CD4-positive, alpha-beta T cell (primary cell): ENCODE measurements at regions of chr20 and their contacts with region 1.

Region 1: GRCh38 chr20:24992487-24993205 is at the start of gene APMAP:
- DNase-seq: peak; percentile 89 to 99 (median 96)
- ATAC-seq: peak; percentile 91
- H3K4me3 ChIP-seq: peak within 1 kb of the TSS; percentile 87
- H3K4me3 Mint-ChIP-seq: peak within 1 kb of the TSS; percentile 96
- H3K27ac ChIP-seq: peak within 1 kb of the TSS; percentile 90 to 97
- H3K27ac Mint-ChIP-seq: peak within 1 kb of the TSS; percentile 99
- H3K4me1 ChIP-seq: peaks cover 42% of the 10 kb centered on the region
- H3K4me1 Mint-ChIP-seq: peaks cover 73% of the 10 kb centered on the region
- H3K27me3 ChIP-seq: no peaks in the 10 kb centered on the region
- H3K27me3 Mint-ChIP-seq: no peaks in the 10 kb centered on the region
- CTCF ChIP-seq: no peak
- total RNA-seq, gene APMAP: 9.5 to 11.3 TPM

Region 2: GRCh38 chr20:23350196-23350903 is 1642.3 kb before region 1 on chr20 and contains the start of gene NXT1:
- CTCF ChIA-PET with region 1: no interaction called
- POLR2A ChIA-PET with region 1: no interaction called
- intact Hi-C with region 1: loop called in 1 of 2 experiments (anchors 5 kb)
- DNase-seq: peak; percentile 90 to 98 (median 94)
- ATAC-seq: peak; percentile 81
- H3K4me3 ChIP-seq: peak within 1 kb of the TSS; percentile 77
- H3K4me3 Mint-ChIP-seq: peak within 1 kb of the TSS; percentile 98
- H3K27ac ChIP-seq: peak within 1 kb of the TSS; percentile 99 to 100
- H3K27ac Mint-ChIP-seq: peak within 1 kb of the TSS; percentile 99
- H3K4me1 ChIP-seq: peaks cover 30% of the 10 kb centered on the region
- H3K4me1 Mint-ChIP-seq: peaks cover 30% of the 10 kb centered on the region
- H3K27me3 ChIP-seq: no peaks in the 10 kb centered on the region
- H3K27me3 Mint-ChIP-seq: no peaks in the 10 kb centered on the region
- CTCF ChIP-seq: no peak
- total RNA-seq, gene NXT1: 55.4 to 57.1 TPM

Region 3: GRCh38 chr20:25057234-25058050 is 64.8 kb after region 1 on chr20:
- CTCF ChIA-PET with region 1: interaction called, 33 read pairs
- POLR2A ChIA-PET with region 1: interaction called, 77 read pairs
- intact Hi-C with region 1: no loop called
- DNase-seq: peak; percentile 45 to 94 (median 71)
- ATAC-seq: peak; percentile 45
- H3K4me3 ChIP-seq: peak overlapping the region; percentile 94
- H3K4me3 Mint-ChIP-seq: peak overlapping the region; percentile 88
- H3K27ac ChIP-seq: peak overlapping the region; percentile 86 to 89
- H3K27ac Mint-ChIP-seq: peak overlapping the region; percentile 88
- H3K4me1 ChIP-seq: peaks cover 55% of the 10 kb centered on the region
- H3K4me1 Mint-ChIP-seq: peaks cover 63% of the 10 kb centered on the region
- H3K27me3 ChIP-seq: no peaks in the 10 kb centered on the region
- H3K27me3 Mint-ChIP-seq: no peaks in the 10 kb centered on the region
- CTCF ChIP-seq: no peak

Region 4: DNA sequence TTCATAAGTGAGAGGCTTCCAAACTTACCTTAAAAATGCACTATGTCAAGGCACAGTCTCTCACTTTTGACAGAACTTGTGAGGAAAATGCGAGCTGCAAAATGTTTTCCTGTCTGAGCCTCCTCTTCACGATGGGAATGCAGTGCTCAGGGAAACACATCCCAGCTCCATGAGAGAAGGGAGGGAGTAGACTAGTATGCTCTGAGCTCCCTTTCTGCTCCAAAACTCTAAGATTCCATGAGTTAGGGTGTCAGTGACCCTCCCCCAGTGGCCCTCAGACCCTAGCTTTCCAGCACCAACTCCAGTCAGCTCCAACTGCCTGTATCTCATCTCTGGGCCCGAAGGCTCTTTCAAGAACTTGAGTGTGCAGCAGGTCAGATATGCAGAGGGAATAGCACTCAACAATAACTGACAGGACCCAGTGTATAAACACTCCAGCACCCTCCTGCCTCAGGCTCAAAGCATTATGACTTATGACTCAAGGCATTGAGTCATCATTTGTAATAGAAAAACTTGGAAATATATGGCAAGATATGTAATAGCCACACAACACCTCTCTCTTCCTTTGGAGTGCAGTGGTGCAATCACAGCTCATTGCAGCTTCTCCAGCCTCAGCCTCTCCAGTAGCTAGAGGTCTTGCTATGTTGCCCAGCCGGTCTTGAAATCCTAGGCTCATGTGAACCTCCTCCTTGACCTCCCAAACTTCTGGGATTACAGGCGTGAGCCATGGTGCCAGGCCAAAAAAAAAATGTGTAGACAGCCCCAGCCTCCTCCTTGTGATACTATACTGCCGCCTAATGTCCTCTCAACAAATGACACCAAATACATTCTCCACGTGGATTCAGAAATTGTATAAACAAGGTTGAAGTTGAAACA is 186.2 kb after region 1 on chr20:
- CTCF ChIA-PET with region 1: interaction called, 3 read pairs
- POLR2A ChIA-PET with region 1: no interaction called
- intact Hi-C with region 1: loop called (anchors 1 to 2 kb)
- DNase-seq: peak in 4 of 14 experiments; percentile 24 to 64 (median 61)
- ATAC-seq: peak; percentile 76
- H3K4me3 ChIP-seq: no peak overlapping the region
- H3K4me3 Mint-ChIP-seq: no peak overlapping the region
- H3K27ac ChIP-seq: no peak overlapping the region
- H3K27ac Mint-ChIP-seq: no peak overlapping the region
- H3K4me1 ChIP-seq: no peaks in the 10 kb centered on the region
- H3K4me1 Mint-ChIP-seq: no peaks in the 10 kb centered on the region
- H3K27me3 ChIP-seq: no peaks in the 10 kb centered on the region
- H3K27me3 Mint-ChIP-seq: peaks cover 18% of the 10 kb centered on the region
- CTCF ChIP-seq: peak; percentile 75

Region 5: DNA sequence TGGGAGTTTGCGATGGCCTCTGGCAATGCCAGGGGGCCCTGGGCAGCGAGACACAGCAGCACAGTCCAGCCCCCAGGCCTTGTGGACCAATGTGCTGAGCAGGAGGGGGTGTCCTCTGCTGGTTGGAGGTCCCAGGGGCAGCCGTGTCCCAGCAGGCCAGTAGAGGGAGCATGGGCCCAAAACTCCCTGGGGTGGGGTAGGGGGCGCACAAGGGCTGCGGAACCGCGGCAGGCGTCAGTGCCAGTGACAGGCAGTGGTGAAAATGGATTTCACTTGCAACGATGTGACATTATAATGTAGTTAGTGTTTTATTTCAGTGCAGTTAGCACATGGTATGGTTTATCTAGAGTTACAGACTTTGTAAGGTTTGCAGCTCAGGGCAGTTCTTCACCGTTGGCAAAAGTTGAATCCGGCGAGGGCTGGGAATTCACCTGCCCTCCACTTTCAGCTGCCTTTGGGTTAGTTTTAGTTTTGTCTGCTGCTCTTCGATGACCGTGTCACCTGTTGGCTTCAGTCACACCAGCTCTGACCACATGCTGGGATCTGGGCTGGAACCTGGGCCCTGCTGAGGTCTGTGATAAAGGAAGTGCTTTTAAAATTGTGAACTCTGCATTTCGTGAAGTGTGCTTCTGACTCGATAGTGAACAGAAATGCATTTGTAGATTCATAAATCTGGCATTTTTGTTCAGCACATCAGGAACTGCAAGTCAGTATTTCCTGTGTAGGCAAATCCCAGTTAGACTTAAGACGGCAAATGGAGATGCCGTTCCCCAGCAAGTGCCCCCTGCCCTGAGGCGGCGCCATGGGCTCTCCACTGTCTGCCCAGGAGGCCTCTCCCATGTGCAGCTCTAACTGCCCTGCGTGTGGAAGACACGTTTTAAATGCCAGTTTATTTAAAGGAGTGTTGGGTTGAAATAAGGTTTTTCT is 302.1 kb after region 1 on chr20:
- CTCF ChIA-PET with region 1: no interaction called
- POLR2A ChIA-PET with region 1: no interaction called
- intact Hi-C with region 1: loop called in 1 of 2 experiments (anchors 10 kb)
- DNase-seq: peak; percentile 37 to 79 (median 59)
- ATAC-seq: peak; percentile 84
- H3K4me3 ChIP-seq: no peak overlapping the region
- H3K4me3 Mint-ChIP-seq: no peak overlapping the region
- H3K27ac ChIP-seq: no peak overlapping the region
- H3K27ac Mint-ChIP-seq: peak overlapping the region; percentile 39
- H3K4me1 ChIP-seq: peaks cover 5% of the 10 kb centered on the region
- H3K4me1 Mint-ChIP-seq: no peaks in the 10 kb centered on the region
- H3K27me3 ChIP-seq: no peaks in the 10 kb centered on the region
- H3K27me3 Mint-ChIP-seq: no peaks in the 10 kb centered on the region
- CTCF ChIP-seq: peak; percentile 83

Region 6: GRCh38 chr20:25696384-25697131 is 703.9 kb after region 1 on chr20 and contains the start of gene ZNF337:
- CTCF ChIA-PET with region 1: no interaction called
- POLR2A ChIA-PET with region 1: no interaction called
- intact Hi-C with region 1: loop called in 1 of 2 experiments (anchors 5 kb)
- DNase-seq: peak; percentile 85 to 96 (median 90)
- ATAC-seq: peak; percentile 97
- H3K4me3 ChIP-seq: peak within 1 kb of the TSS; percentile 85
- H3K4me3 Mint-ChIP-seq: peak within 1 kb of the TSS; percentile 94
- H3K27ac ChIP-seq: peak within 1 kb of the TSS; percentile 42 to 82
- H3K27ac Mint-ChIP-seq: peak within 1 kb of the TSS; percentile 88
- H3K4me1 ChIP-seq: peaks cover 13% of the 10 kb centered on the region
- H3K4me1 Mint-ChIP-seq: peaks cover 59% of the 10 kb centered on the region
- H3K27me3 ChIP-seq: no peaks in the 10 kb centered on the region
- H3K27me3 Mint-ChIP-seq: no peaks in the 10 kb centered on the region
- CTCF ChIP-seq: no peak
- total RNA-seq, gene ZNF337: 17.9 to 18.1 TPM